K562 (cell line): ENCODE measurements at regions of chr2 and their contacts with region 1.

Region 1: DNA sequence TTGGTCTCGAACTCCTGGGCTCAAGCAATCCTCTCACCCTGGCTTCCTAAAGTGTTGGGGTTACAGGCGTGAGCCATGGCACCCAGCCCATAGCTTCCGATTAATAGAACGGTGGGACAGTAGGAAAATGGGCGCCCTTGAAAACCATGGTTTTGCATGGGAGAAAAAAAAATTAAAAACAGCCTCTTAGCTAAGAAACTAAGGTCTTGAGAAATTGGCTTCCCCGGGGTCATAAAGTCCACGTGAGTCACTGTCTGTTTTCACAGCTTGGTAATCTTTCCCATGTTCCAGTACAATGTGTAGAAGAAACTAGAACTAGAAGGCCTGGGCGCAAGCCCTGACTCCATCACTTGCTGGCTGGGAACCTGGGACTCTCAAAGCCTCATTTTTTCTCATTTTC is 20.7 kb downstream of the B3GNT2 start:
- DNase-seq: peak in 1 of 4 experiments; percentile 26
- ATAC-seq: no peak
- H3K4me3 ChIP-seq: no peak overlapping the region
- H3K27ac ChIP-seq: no peak overlapping the region
- H3K4me1 ChIP-seq: peaks cover 16 to 42% of the 10 kb centered on the region in 2 experiments
- H3K27me3 ChIP-seq: no peaks in the 10 kb centered on the region
- CTCF ChIP-seq: no peak
- EP300 ChIP-seq: no peak
- POLR2A ChIP-seq: no peak
- RAD21 ChIP-seq: no peak

Region 2: GRCh38 chr2:62227386-62228075 is 10.9 kb after region 1 on chr2:
- CTCF ChIA-PET with region 1: no interaction called
- POLR2A ChIA-PET with region 1: interaction called, 10 read pairs
- in situ Hi-C with region 1: no loop called
- intact Hi-C with region 1: no loop called
- DNase-seq: no peak
- ATAC-seq: no peak; the same call in 2 of the 3 replicates
- H3K4me3 ChIP-seq: no peak overlapping the region
- H3K27ac ChIP-seq: no peak overlapping the region
- H3K4me1 ChIP-seq: no peaks in the 10 kb centered on the region
- H3K27me3 ChIP-seq: no peaks in the 10 kb centered on the region
- CTCF ChIP-seq: no peak
- EP300 ChIP-seq: no peak
- POLR2A ChIP-seq: no peak
- RAD21 ChIP-seq: no peak

Region 3: GRCh38 chr2:62415019-62415431 is 198.4 kb after region 1 on chr2:
- CTCF ChIA-PET with region 1: no interaction called
- POLR2A ChIA-PET with region 1: no interaction called
- in situ Hi-C with region 1: no loop called
- intact Hi-C with region 1: no loop called
- DNase-seq: no peak
- ATAC-seq: no peak
- H3K4me3 ChIP-seq: no peak overlapping the region
- H3K27ac ChIP-seq: no peak overlapping the region
- H3K4me1 ChIP-seq: peaks cover 3 to 6% of the 10 kb centered on the region in 2 experiments; a peak in 2 of 5 replicates
- H3K27me3 ChIP-seq: no peaks in the 10 kb centered on the region
- CTCF ChIP-seq: no peak
- EP300 ChIP-seq: no peak
- POLR2A ChIP-seq: no peak
- RAD21 ChIP-seq: no peak